ENCODE measurements at regions of chr17 and their contacts with region 1.

Region 1: GRCh38 chr17:34146440-34147043 is 108.5 kb upstream of the CCL2 start:
- DNase-seq: peak; percentile 76
- ATAC-seq: peak; percentile 64
- H3K4me3 Mint-ChIP-seq: no peak overlapping the region
- H3K27ac Mint-ChIP-seq: no peak overlapping the region
- H3K4me1 Mint-ChIP-seq: no peaks in the 10 kb centered on the region
- H3K27me3 Mint-ChIP-seq: peaks cover 9% of the 10 kb centered on the region

Region 2: GRCh38 chr17:33779225-33779591 is 367.3 kb before region 1 on chr17:
- CTCF ChIA-PET with region 1: interaction called, 38 read pairs
- POLR2A ChIA-PET with region 1: no interaction called
- DNase-seq: peak; percentile 55
- ATAC-seq: no peak
- H3K4me3 Mint-ChIP-seq: no peak overlapping the region
- H3K27ac Mint-ChIP-seq: no peak overlapping the region
- H3K4me1 Mint-ChIP-seq: no peaks in the 10 kb centered on the region
- H3K27me3 Mint-ChIP-seq: peaks cover 6% of the 10 kb centered on the region

Region 3: GRCh38 chr17:33927732-33928133 is 218.8 kb before region 1 on chr17:
- CTCF ChIA-PET with region 1: interaction called, 30 read pairs
- POLR2A ChIA-PET with region 1: no interaction called
- DNase-seq: no peak
- ATAC-seq: no peak
- H3K4me3 Mint-ChIP-seq: no peak overlapping the region
- H3K27ac Mint-ChIP-seq: no peak overlapping the region
- H3K4me1 Mint-ChIP-seq: no peaks in the 10 kb centered on the region
- H3K27me3 Mint-ChIP-seq: no peaks in the 10 kb centered on the region

Region 4: DNA sequence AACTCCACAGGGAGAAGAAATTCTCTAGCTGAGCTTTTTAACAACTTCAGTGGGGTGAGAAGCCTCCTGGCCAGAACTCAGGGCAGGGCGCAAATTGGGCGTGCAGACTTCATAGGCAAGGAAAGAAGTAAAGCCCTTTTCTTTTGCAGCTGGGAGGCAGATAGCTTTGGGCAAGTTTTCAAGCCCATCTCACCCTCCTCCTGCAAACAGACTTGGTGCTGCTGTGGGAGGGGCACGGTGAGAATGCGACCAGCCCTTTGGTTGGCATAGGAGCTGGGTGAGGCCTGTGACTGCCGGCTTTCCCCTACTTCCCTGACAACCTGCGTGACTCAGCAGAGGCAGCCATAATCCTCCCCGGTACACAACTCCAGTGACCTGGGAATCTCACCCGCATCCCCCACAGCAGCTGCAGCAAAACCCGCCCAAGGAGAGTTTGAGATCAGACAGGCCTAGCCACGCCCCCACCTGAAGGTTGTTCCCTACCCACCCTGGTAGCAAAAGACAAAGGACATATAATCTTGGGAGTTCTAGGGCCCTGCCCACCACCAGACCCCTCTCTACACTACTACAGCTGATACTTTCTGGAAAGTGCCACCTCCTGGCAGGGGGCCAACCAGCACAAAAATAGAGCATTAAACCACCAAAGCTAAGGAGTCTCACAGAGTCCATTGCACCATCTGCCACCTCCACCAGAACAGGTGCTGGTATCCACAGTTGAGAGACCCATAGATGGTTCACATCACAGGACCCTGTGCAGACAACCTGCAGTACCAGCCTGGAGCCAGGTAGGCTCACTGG is 86.9 kb before region 1 on chr17:
- CTCF ChIA-PET with region 1: no interaction called
- POLR2A ChIA-PET with region 1: no interaction called
- DNase-seq: no peak
- ATAC-seq: no peak
- H3K4me3 Mint-ChIP-seq: no peak overlapping the region
- H3K27ac Mint-ChIP-seq: no peak overlapping the region
- H3K4me1 Mint-ChIP-seq: no peaks in the 10 kb centered on the region
- H3K27me3 Mint-ChIP-seq: peaks cover 10% of the 10 kb centered on the region

Region 5: GRCh38 chr17:34156741-34157589 is 10.4 kb after region 1 on chr17:
- CTCF ChIA-PET with region 1: interaction called, 14 read pairs
- POLR2A ChIA-PET with region 1: no interaction called
- DNase-seq: no peak
- ATAC-seq: no peak
- H3K4me3 Mint-ChIP-seq: no peak overlapping the region
- H3K27ac Mint-ChIP-seq: no peak overlapping the region
- H3K4me1 Mint-ChIP-seq: peaks cover 10% of the 10 kb centered on the region
- H3K27me3 Mint-ChIP-seq: peaks cover 66% of the 10 kb centered on the region

Region 6: GRCh38 chr17:34177642-34178041 is 31.1 kb after region 1 on chr17:
- CTCF ChIA-PET with region 1: no interaction called
- POLR2A ChIA-PET with region 1: no interaction called
- DNase-seq: no peak
- ATAC-seq: no peak
- H3K4me3 Mint-ChIP-seq: no peak overlapping the region
- H3K27ac Mint-ChIP-seq: no peak overlapping the region
- H3K4me1 Mint-ChIP-seq: peaks cover 5% of the 10 kb centered on the region
- H3K27me3 Mint-ChIP-seq: peaks cover 16% of the 10 kb centered on the region

Measured in activated CD8-positive, alpha-beta T cell treated with anti-CD3 and anti-CD28 coated beads, Interleukin-2, amount 10 ng/mL, durations not matched to agents 7 days and 5 days (primary cell).